ENCODE measurements at regions of chr5 and their contacts with region 1.

Region 1: DNA sequence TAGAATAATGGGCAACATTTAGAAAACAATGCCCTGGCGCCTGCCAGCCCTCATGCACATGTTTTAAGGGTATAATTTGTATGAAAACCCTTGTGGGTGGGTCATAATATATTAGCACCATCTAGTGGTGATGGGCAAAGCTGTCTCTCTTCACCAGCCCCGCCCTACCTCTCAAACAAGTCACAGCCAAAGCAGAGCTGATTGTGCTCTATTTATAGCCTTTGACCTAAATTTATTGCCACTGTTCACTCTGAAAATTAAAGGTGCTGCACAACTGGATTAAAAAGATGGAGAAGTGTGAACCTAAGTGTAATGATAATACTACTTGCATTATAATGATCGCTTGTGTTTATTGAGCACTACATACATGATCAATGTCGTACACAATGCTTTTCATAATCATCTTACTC is 131.9 kb upstream of the ANKH start:
- DNase-seq: peak in 4 of 5 donors; percentile 65 to 71 (median 68)
- ATAC-seq: peak; percentile 72 to 89 (median 87)
- H3K4me3 ChIP-seq: no peak overlapping the region
- H3K27ac ChIP-seq: no peak overlapping the region
- H3K4me1 ChIP-seq: peaks cover 4 to 46% (median 34%) of the 10 kb centered on the region in 12 donors
- H3K27me3 ChIP-seq: no peaks in the 10 kb centered on the region
- CTCF ChIP-seq: peak; percentile 76 to 93 (median 86)
- POLR2A ChIP-seq: no peak

Region 2: DNA sequence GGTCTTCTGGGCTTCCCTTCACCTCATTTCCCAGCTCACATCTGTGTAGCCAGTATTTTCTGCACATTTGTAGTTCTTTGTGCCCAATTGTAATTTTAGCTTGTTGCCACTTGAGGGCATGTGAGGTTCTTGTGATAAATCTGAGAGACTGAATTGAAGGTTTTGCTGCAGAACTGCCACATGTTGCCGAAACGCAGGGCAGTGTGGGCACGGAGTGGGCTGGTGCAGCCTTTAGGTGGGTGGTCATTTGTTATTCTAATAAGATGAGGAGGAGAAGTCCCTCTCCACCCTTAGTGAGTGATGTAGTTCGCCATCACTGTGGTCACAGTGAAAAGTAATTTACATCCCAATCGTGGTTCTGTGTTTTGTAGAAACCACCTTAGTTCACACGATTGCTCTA is 317.8 kb before region 1 on chr5:
- intact Hi-C with region 1: loop called in 2 of 10 experiments (anchors 2 kb)
- DNase-seq: no peak
- ATAC-seq: peak; percentile 11 to 54 (median 43)
- H3K4me3 ChIP-seq: no peak overlapping the region
- H3K27ac ChIP-seq: peak overlapping the region in 10 of 12 donors; percentile 30 to 87 (median 75)
- H3K4me1 ChIP-seq: peaks cover 0 to 59% (median 23%) of the 10 kb centered on the region in 12 donors
- H3K27me3 ChIP-seq: no peaks in the 10 kb centered on the region
- CTCF ChIP-seq: peak; percentile 31 to 75 (median 58)
- POLR2A ChIP-seq: no peak

Region 3: GRCh38 chr5:14946815-14947640 is 56.5 kb before region 1 on chr5:
- intact Hi-C with region 1: loop called in 7 of 10 experiments (anchors 5 to 10 kb)
- DNase-seq: no peak
- ATAC-seq: peak; percentile 49 to 74 (median 62)
- H3K4me3 ChIP-seq: no peak overlapping the region
- H3K27ac ChIP-seq: no peak overlapping the region
- H3K4me1 ChIP-seq: peaks cover 0 to 10% (median 6%) of the 10 kb centered on the region in 12 donors
- H3K27me3 ChIP-seq: no peaks in the 10 kb centered on the region
- CTCF ChIP-seq: peak; percentile 14 to 59 (median 38)
- POLR2A ChIP-seq: no peak

Region 4: DNA sequence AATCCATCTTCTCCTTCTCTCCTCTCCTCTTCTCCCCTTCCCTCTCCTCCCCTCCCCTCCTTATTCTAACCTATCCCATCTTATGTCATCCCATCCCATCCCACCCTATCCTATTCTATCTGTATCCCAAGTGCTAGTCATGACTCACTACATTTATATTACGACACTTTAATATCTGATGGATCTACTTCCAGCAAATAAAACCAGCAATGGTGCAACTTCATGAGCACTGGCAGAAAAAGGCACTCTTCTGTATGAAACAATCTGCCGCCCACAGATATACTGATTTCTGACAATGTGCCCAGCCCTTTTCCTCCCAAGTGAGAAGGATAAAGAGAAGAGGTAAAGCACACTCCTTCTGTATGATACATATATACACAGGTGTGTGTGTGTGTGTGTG is 45.3 kb before region 1 on chr5:
- intact Hi-C with region 1: loop called in 1 of 10 experiments (anchors 10 kb)
- DNase-seq: no peak
- ATAC-seq: no peak
- H3K4me3 ChIP-seq: no peak overlapping the region
- H3K27ac ChIP-seq: no peak overlapping the region
- H3K4me1 ChIP-seq: peaks cover 0 to 13% (median 2%) of the 10 kb centered on the region in 12 donors
- H3K27me3 ChIP-seq: no peaks in the 10 kb centered on the region
- CTCF ChIP-seq: no peak
- POLR2A ChIP-seq: no peak

Region 5: GRCh38 chr5:14968796-14969195 is 34.7 kb before region 1 on chr5:
- intact Hi-C with region 1: no loop called
- DNase-seq: no peak
- ATAC-seq: no peak
- H3K4me3 ChIP-seq: no peak overlapping the region
- H3K27ac ChIP-seq: no peak overlapping the region
- H3K4me1 ChIP-seq: no peaks in the 10 kb centered on the region
- H3K27me3 ChIP-seq: no peaks in the 10 kb centered on the region
- CTCF ChIP-seq: no peak
- POLR2A ChIP-seq: no peak

Measured in heart left ventricle (tissue), 16 donors.